Right cardiac atrium (tissue), 5 donors: ENCODE measurements at regions of chr5 and their contacts with region 1.

Region 1: DNA sequence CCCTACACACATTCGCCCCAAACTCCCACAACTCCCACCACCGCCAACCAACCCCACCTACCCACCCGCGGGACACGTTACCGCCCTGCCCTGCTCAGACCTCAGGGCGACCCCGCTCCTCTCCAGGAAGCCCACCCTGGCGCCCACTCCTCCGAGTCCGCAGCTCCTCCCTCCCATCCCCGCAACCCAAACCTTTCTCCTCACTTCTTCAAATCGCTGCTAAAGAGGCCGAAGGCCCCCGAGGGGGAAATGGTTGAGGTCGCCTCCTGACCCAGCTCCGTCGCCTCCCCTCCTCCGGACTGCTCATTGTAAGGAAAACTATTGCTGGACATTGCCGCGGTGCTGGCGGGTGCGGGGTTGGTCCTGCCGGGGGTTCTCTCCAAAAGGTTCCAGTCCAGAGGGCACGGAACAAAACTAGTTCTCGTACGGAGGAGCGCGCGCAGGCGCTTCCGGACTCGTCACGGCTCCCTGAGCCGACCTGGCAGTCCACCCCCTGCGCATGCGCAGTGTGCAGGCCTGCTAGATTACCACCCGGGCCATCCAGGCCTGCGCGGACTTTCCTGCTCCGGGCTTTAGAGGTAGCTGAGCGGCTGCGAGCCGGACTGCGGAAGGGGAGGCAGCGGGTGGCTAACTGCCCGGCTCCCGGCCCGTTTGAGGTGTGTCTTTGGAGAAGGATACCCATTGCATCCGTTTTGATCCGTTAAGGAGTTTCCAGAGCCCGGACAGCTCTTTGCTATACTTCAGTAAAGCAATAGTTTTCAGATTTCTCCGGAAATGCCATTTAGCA is at the start of gene AP3B1:
- DNase-seq: peak; percentile 100
- ATAC-seq: peak; percentile 98
- H3K4me3 ChIP-seq: peak within 1 kb of the TSS; percentile 93
- H3K27ac ChIP-seq: peak within 1 kb of the TSS; percentile 85
- H3K4me1 ChIP-seq: peaks cover 4% of the 10 kb centered on the region
- H3K27me3 ChIP-seq: no peaks in the 10 kb centered on the region
- total RNA-seq, gene AP3B1: 20.8 to 28.0 (median 24.8) TPM

Region 2: DNA sequence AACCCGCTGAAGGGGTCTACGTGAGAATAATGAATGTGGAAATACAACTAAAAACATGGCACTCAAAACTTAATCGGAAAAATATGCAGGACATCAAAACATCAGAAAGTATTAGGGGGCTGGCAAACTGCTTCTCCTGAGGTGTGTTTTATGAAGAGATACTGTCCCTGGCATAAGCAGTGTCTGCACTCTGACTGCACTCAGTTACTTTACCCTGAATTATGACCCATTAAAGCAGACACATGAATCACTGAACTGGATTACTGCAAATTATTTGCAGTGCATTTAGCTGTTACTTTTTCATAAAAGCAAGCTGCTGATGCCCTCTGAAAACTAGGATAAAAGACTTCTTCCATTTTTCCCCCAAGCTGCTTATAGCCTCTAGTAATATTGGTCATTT is 164.8 kb before region 1 on chr5:
- intact Hi-C with region 1: no loop called
- DNase-seq: no peak
- ATAC-seq: no peak
- H3K4me3 ChIP-seq: no peak overlapping the region
- H3K27ac ChIP-seq: no peak overlapping the region
- H3K4me1 ChIP-seq: no peaks in the 10 kb centered on the region
- H3K27me3 ChIP-seq: no peaks in the 10 kb centered on the region

Region 3: DNA sequence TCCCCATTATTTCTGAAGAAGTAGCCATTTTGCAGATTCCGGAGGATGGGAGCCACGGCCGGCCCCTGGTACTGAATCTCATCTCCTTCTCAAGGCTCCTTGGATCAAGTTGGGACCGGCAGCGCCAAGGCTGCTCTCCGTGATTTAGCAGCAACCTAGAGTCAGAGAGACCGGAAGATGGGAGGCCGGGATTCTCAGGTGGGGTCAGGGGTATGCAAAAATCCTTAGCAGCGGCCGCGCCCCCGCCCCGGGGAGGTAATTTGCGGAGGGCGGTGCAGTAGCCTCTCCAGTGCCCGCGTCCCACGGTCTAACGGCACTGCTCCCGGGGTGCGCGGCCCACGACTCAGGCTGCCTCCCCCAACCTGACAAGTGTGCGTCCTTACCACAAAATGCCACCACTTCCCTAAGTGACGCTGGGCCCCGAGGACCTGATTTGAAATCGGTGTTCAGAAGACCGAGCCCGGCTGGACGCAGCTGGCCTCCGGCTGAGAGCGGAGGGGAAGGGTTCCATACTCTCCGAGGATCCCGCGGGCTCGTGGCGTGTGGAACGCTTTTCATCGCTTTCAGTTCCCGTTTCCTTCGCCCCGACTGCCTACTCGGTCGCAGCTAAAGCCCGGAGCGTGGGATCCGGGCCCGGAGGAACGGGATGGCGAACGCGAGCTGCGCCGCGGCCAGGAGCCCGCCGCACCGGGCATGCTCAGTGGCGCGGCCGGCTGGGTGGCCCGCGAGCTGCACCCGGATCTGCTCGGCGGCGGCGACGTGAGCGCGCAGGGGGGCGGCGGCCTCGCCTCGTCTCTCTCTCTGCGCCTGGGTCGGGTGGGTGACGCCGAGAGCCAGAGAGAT is 65.6 kb after region 1 on chr5 and contains the start of gene SCAMP1:
- intact Hi-C with region 1: loop called (anchors 5 kb)
- DNase-seq: peak; percentile 92 to 97 (median 97)
- ATAC-seq: peak; percentile 98 to 99
- H3K4me3 ChIP-seq: peak within 1 kb of the TSS; percentile 56
- H3K27ac ChIP-seq: peak within 1 kb of the TSS; percentile 85
- H3K4me1 ChIP-seq: no peaks in the 10 kb centered on the region
- H3K27me3 ChIP-seq: no peaks in the 10 kb centered on the region
- total RNA-seq, gene SCAMP1: 37.9 to 44.1 (median 40.4) TPM

Region 4: DNA sequence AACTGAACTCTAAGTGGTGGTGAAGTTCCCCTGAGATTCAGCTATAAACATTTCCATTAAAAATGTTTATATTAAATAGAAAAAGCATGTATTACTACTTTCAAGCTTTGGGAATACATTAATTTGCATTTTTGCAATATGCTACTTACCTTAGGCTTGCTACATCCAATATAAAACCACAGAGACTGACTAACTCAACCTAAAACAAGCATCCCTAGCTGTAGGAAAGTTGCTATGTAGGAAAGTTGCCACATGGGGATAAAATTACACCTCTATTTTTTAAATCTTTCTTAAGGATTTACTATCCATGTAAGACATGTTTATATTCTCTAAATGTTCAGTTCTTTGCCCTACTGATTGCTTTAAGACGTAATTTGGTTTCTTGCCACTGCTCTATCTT is 78.8 kb after region 1 on chr5:
- intact Hi-C with region 1: no loop called
- DNase-seq: no peak
- ATAC-seq: no peak
- H3K4me3 ChIP-seq: no peak overlapping the region
- H3K27ac ChIP-seq: no peak overlapping the region
- H3K4me1 ChIP-seq: peaks cover 5% of the 10 kb centered on the region
- H3K27me3 ChIP-seq: no peaks in the 10 kb centered on the region